PC-9 (cell line): ENCODE measurements at regions of chr7 and their contacts with region 1.

Region 1: DNA sequence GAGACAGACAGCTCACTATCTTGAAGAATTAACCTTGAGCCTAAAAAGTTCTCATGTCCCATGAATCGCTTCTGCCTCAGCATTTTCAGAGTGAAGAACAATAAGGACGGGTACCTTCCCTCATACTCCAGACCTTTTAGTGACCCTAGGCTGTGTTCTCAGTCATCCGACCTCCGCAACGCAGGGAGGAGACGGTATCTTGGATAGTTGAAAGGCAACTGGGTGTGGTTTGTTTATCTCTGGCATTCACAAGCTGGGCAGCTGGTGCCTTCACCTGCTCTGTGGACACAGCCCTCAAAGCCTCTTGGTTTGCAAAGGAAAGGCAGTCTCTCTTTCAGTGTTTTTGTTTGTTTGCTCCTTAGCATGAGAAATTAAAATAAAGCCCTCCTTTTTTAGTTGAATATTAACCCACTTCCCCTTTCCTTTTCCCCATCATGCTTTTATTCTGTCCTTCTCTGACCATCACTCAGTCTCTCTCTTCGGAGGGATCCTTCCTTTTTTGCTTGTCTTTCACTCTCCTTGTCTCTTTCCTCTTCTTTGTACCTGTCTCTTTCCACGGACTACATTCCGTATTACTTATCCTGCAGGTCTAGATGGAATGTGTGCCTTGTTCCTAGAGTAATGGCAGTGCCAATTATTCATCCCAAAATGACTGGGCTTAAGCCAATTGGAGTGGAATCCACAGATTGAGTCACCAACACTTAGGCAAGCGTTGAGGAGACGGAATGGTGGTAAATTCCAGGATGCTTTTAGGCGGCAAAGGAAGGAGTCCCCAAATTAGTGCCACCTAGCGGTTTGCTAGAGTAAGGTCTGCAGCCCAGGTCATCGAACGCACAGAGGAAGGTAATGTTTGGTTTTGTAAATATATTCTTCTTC is 45.8 kb downstream of the PRR15 start:
- DNase-seq: peak; percentile 69 to 93
- H3K4me3 ChIP-seq: peak overlapping the region; percentile 27; the same call in 1 of the 2 replicates
- H3K27ac ChIP-seq: peak overlapping the region; percentile 78
- H3K4me1 ChIP-seq: peaks cover 76% of the 10 kb centered on the region
- H3K27me3 ChIP-seq: no peaks in the 10 kb centered on the region
- CTCF ChIP-seq: peak; percentile 86

Region 2: DNA sequence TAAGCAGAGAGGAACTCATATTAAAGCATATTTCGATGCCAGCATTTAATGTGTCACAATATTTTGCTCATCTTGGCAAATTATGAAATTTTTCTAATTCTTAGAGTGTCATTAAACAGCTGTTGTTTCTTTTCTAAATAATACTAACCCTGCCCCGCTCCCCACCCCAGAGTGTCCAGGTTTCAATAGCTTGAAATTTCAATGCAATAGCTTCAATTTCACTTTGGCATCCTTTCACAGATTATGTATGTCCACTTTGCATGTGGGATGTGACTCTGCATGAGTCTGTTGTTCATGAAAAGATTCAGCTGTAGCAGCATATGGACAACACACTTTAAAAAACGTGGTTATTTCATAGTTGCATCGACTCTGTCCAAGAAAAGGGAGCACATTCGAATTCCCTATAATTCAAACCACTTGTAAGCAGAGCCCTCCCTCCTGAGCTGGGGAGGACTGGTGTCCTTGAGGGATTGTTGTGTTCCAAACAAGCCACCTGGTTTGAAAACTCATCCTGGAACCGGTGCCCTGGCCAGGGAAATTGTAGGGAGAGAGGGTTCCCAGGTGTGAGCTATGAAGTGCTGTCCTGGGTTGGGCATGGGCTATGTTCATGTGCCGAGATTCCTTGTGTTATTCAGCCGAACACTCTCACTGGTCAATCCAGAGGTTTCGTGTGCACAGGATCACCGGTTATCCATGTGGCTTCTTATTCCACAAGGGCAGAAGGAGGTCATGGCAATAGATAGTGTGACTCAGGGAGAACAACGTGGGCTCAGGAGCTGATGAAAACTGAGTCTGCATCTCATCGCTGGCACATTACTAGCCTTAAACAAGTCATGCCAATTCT is 1261.7 kb before region 1 on chr7:
- CTCF ChIA-PET with region 1: no interaction called
- POLR2A ChIA-PET with region 1: no interaction called
- intact Hi-C with region 1: no loop called
- DNase-seq: peak in 1 of 2 experiments; percentile 35
- H3K4me3 ChIP-seq: no peak overlapping the region
- H3K27ac ChIP-seq: no peak overlapping the region
- H3K4me1 ChIP-seq: peaks cover 6% of the 10 kb centered on the region
- H3K27me3 ChIP-seq: no peaks in the 10 kb centered on the region
- CTCF ChIP-seq: no peak

Region 3: DNA sequence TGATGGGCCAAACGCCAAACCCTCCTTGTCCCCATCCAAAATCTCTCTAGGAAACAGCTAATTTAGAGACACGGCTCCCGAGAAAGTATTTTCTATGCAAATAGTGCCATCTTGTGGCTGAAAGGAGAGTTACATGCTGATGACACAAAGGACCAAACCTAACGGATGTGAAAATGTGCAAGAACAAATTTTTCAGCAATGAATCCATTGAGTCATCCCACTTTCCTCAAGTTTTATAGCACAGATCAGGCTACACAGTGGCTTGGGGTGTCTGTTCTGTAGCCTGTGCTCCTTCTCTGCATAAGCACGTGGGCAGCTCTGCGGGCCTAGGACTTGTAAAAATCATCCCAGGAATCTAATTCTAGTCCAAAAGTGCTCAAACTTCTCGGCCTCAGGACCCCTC is 200.6 kb before region 1 on chr7:
- CTCF ChIA-PET with region 1: interaction called, 3 read pairs
- POLR2A ChIA-PET with region 1: no interaction called
- intact Hi-C with region 1: loop called (anchors 5 kb)
- DNase-seq: peak; percentile 55 to 77
- H3K4me3 ChIP-seq: no peak overlapping the region
- H3K27ac ChIP-seq: no peak overlapping the region
- H3K4me1 ChIP-seq: peaks cover 19% of the 10 kb centered on the region
- H3K27me3 ChIP-seq: peaks cover 4% of the 10 kb centered on the region; the same call in 1 of the 2 replicates
- CTCF ChIP-seq: peak; percentile 99

Region 4: DNA sequence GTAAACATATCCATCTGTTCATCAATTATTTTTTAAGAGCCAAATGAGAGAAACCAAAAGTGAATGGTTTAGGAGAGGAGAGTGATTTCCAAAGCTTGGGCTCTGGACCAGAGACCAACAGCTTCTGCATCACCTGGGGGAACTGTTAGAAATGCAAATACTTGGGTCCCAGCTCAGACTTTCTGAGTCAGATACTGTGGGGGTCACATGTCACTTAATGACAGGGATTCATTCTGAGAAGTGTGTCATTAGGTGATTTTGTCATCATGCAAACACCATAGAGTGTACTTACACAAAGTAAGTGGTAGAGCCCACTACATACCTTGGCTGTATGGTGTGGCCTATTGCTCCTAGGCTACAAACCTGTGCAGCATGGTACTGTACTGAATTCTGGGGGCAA is 174.2 kb before region 1 on chr7:
- CTCF ChIA-PET with region 1: no interaction called
- POLR2A ChIA-PET with region 1: no interaction called
- intact Hi-C with region 1: no loop called
- DNase-seq: no peak
- H3K4me3 ChIP-seq: no peak overlapping the region
- H3K27ac ChIP-seq: no peak overlapping the region
- H3K4me1 ChIP-seq: no peaks in the 10 kb centered on the region
- H3K27me3 ChIP-seq: no peaks in the 10 kb centered on the region
- CTCF ChIP-seq: no peak

Region 5: DNA sequence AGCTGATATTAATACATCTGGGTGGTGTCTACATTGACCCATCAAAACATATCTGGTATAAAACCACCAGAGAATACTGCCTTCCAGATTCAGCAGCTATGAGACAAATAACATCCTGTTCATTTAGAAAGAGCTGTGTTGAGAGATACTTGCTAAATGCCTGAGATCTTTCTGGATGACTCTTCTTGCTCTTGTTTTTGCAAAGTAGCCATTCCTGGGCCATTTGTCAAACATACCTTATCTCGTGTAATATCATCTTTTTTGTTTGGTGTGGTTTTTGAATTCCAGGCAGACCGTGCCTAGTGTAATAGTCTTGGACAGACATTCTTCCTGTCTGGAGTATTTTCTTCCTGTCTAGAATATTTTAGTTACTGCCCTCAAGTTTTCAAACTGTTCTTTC is 120.4 kb before region 1 on chr7:
- CTCF ChIA-PET with region 1: interaction called, 4 read pairs
- POLR2A ChIA-PET with region 1: interaction called, 4 read pairs
- intact Hi-C with region 1: loop called (anchors 2 kb)
- DNase-seq: peak; percentile 40 to 82
- H3K4me3 ChIP-seq: no peak overlapping the region
- H3K27ac ChIP-seq: peak overlapping the region; percentile 28
- H3K4me1 ChIP-seq: peaks cover 23% of the 10 kb centered on the region
- H3K27me3 ChIP-seq: no peaks in the 10 kb centered on the region
- CTCF ChIP-seq: no peak

Region 6: GRCh38 chr7:29593459-29593858 is 15.9 kb before region 1 on chr7:
- CTCF ChIA-PET with region 1: no interaction called
- POLR2A ChIA-PET with region 1: interaction called, 3 read pairs
- intact Hi-C with region 1: loop called (anchors 2 kb)
- DNase-seq: peak in 1 of 2 experiments; percentile 93
- H3K4me3 ChIP-seq: peak overlapping the region; percentile 12; the same call in 1 of the 2 replicates
- H3K27ac ChIP-seq: peak overlapping the region; percentile 74
- H3K4me1 ChIP-seq: peaks cover 21% of the 10 kb centered on the region
- H3K27me3 ChIP-seq: no peaks in the 10 kb centered on the region
- CTCF ChIP-seq: no peak

Region 7: GRCh38 chr7:29988424-29989256 is 379.2 kb after region 1 on chr7:
- CTCF ChIA-PET with region 1: no interaction called
- POLR2A ChIA-PET with region 1: interaction called, 4 read pairs
- intact Hi-C with region 1: loop called (anchors 5 kb)
- DNase-seq: peak in 1 of 2 experiments; percentile 36
- H3K4me3 ChIP-seq: peak overlapping the region; percentile 95
- H3K27ac ChIP-seq: peak overlapping the region; percentile 87
- H3K4me1 ChIP-seq: peaks cover 37% of the 10 kb centered on the region
- H3K27me3 ChIP-seq: no peaks in the 10 kb centered on the region
- CTCF ChIP-seq: no peak

Region 8: GRCh38 chr7:30026229-30027064 is 417.0 kb after region 1 on chr7 and contains the start of gene FKBP14:
- CTCF ChIA-PET with region 1: no interaction called
- POLR2A ChIA-PET with region 1: no interaction called
- intact Hi-C with region 1: loop called (anchors 5 kb)
- DNase-seq: peak; percentile 97 to 99
- H3K4me3 ChIP-seq: peak within 1 kb of the TSS; percentile 75
- H3K27ac ChIP-seq: peak within 1 kb of the TSS; percentile 66
- H3K4me1 ChIP-seq: peaks cover 43% of the 10 kb centered on the region
- H3K27me3 ChIP-seq: no peaks in the 10 kb centered on the region
- CTCF ChIP-seq: no peak
- total RNA-seq, gene FKBP14: 29.8 and 29.9 TPM in 2 replicates

Region 9: DNA sequence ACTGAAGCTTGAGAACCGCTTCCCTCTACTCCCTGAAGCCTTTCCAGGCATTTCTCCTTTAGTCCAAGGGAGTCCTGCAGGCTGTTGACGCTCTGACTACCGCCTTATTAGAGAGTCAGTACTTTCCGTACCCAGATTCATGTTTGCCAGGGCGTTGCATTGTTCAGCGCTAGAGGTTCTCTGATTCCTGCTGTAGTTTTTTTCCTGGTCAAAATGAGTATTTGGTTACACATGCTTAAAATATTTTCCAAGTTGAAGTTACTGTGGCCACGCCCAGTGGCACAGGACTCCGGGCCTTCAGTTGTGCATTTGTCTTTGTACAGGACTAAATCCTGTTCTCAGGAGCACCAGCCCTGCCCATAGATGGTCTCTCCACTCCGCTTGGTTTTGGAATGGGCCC is 533.3 kb after region 1 on chr7:
- CTCF ChIA-PET with region 1: no interaction called
- POLR2A ChIA-PET with region 1: no interaction called
- intact Hi-C with region 1: loop called (anchors 5 kb)
- DNase-seq: peak; percentile 84 to 97
- H3K4me3 ChIP-seq: peak overlapping the region; percentile 10; the same call in 1 of the 2 replicates
- H3K27ac ChIP-seq: peak overlapping the region; percentile 72
- H3K4me1 ChIP-seq: peaks cover 33% of the 10 kb centered on the region
- H3K27me3 ChIP-seq: peaks cover 27% of the 10 kb centered on the region; the same call in 1 of the 2 replicates
- CTCF ChIP-seq: no peak